ENCODE measurements at regions of chr13 and their contacts with region 1.

Region 1: DNA sequence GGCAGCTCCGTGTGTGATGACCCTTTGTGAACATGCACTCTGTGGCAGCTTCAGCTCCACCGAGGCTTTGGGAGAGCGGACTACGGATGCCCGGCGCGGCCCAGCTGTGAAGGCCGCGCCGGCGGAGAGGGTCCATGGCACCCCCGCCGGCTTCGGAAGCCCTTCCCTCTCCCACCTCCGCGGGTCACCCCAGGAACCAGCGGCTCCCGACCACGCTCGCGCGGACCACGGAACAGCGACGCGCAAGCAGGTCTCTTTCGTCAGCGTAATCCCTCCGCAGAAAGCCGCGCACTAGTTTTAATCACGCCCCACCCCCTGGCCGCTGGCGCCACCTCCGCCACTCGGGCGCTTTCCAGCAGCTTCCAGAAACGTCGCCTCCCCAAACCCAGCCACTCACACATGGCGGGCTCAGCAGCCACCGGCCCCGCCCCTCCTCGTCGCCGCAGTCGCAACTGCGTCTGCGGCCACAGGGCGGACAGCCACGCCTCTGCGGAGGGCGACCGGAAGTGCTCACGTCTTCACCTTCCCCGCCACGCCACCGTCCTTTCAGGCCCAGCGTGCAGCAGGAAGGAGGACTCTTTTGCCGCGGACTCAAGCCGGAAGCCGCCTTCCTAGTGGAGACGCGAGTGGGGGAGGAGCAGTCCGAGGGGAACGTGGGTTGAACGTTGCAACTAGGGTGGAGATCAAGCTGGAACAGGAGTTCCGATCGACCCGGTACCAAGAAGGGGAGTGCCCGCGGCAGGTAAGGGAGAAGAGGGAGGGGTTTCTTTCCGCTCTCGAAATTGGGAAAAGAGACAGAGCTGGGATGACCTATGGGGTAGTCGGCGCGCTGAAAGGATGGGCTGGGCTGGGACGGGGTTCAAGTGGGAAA is at the start of gene USPL1:
- DNase-seq: peak; percentile 99
- ATAC-seq: peak; percentile 98
- H3K4me3 ChIP-seq: peak within 1 kb of the TSS; percentile 64
- H3K27ac ChIP-seq: peak within 1 kb of the TSS; percentile 100
- H3K4me1 ChIP-seq: no peaks in the 10 kb centered on the region
- H3K27me3 ChIP-seq: no peaks in the 10 kb centered on the region
- total RNA-seq, gene USPL1: 10.3 to 12.3 (median 10.5) TPM

Region 2: GRCh38 chr13:30465585-30466357 is 151.8 kb before region 1 on chr13 and contains the start of gene HMGB1:
- intact Hi-C with region 1: loop called in 2 of 4 experiments (anchors 10 kb)
- DNase-seq: peak; percentile 98 to 99 (median 98)
- ATAC-seq: peak; percentile 98 to 99
- H3K4me3 ChIP-seq: peak within 1 kb of the TSS; percentile 99
- H3K27ac ChIP-seq: peak within 1 kb of the TSS; percentile 99
- H3K4me1 ChIP-seq: no peaks in the 10 kb centered on the region
- H3K27me3 ChIP-seq: no peaks in the 10 kb centered on the region
- total RNA-seq, gene HMGB1: 185 to 198 (median 192) TPM

Region 3: GRCh38 chr13:30659980-30660379 is 42.4 kb after region 1 on chr13:
- intact Hi-C with region 1: no loop called
- DNase-seq: no peak
- ATAC-seq: peak; percentile 32 to 40
- H3K4me3 ChIP-seq: no peak overlapping the region
- H3K27ac ChIP-seq: no peak overlapping the region
- H3K4me1 ChIP-seq: peaks cover 3% of the 10 kb centered on the region
- H3K27me3 ChIP-seq: no peaks in the 10 kb centered on the region

Region 4: DNA sequence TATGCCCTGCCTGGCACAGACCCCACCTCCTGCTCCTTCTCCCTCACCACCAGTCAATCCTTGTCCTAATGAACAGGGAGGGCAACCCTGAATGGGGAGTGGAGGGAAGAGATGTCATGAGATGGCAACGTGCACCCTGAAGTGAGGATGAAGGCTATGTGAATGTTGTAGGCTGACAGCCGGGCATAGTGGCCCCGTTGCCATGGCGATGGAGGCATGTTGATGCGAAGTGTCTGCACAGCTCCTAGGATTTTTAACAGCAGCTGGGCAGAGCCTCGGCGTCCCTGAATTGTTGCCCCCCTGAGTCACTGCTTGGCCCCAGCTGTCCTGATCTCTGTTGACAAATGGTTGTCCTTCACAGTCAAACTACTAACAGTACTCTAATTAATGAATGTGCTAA is 113.0 kb after region 1 on chr13:
- intact Hi-C with region 1: no loop called
- DNase-seq: peak in 1 of 3 donors; percentile 43
- ATAC-seq: no peak
- H3K4me3 ChIP-seq: no peak overlapping the region
- H3K27ac ChIP-seq: no peak overlapping the region
- H3K4me1 ChIP-seq: no peaks in the 10 kb centered on the region
- H3K27me3 ChIP-seq: no peaks in the 10 kb centered on the region

Region 5: DNA sequence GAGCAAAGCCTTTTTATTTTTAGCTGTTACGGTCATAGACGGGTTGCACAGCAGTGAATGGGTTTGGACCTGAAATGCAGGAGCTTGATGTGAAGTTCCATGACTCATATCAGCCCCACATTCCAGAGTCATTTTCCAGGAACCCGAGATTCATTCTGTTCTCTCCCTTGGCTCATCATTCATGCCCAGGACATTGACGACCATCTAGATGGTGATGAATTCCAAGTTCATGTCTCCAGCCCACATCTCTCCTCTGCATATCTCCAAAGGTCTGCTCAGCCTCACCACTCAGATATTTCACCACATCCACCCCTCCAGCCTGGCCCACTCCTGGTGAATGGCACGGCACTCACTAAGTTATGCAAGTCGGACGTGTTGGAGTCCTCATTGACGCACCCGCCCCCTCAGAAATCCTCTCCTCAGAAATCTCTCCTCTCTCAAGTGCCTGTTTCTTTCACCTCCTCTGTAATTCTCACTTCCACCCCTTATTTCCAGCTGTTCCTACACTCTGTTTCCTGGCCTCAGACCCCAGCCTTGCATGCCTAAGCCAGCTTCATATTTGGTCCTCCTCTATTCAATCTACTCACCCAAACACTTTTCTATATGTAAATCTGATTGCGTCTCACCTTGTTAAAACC is 200.9 kb after region 1 on chr13:
- intact Hi-C with region 1: no loop called
- DNase-seq: peak in 2 of 3 donors; percentile 71 to 78
- ATAC-seq: peak; percentile 84 to 94
- H3K4me3 ChIP-seq: no peak overlapping the region
- H3K27ac ChIP-seq: no peak overlapping the region
- H3K4me1 ChIP-seq: no peaks in the 10 kb centered on the region
- H3K27me3 ChIP-seq: no peaks in the 10 kb centered on the region